ENCODE measurements at regions of chr18 and their contacts with region 1.

Region 1: DNA sequence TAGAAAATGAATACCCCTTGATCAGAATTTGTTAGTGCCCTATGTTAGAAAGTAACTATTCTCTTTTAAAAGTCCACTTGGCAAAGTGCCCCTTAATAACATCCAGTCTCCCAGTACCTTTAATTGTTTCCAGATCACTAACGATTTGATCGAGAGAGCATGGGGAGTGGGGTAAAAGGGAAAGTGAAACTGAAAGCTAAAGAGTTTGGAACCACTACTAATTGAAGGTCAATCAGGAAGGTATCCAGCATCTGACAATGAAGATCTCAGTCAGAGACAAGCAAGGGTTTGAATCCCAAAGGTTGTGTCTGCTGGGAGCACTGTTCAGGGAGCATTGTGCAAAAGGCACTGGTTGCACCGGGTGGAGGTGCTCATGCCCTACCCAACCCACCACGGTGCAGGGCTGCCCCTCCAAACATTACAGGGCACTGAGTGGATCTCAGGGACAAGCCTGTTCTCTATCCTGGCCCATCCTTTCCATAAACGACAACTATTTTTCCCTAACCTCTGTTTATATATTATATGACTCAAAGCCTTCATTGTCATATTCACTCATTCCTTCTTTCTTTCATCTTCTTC is 14.6 kb upstream of the RIT2 start:
- DNase-seq: peak in 1 of 9 experiments; percentile 1
- ATAC-seq: no peak
- H3K4me3 ChIP-seq: no peak overlapping the region
- H3K4me3 Mint-ChIP-seq: no peak overlapping the region
- H3K27ac ChIP-seq: no peak overlapping the region
- H3K27ac Mint-ChIP-seq: no peak overlapping the region
- H3K4me1 ChIP-seq: no peaks in the 10 kb centered on the region
- H3K4me1 Mint-ChIP-seq: no peaks in the 10 kb centered on the region
- H3K27me3 ChIP-seq: no peaks in the 10 kb centered on the region
- H3K27me3 Mint-ChIP-seq: no peaks in the 10 kb centered on the region
- CTCF ChIP-seq: no peak

Region 2: DNA sequence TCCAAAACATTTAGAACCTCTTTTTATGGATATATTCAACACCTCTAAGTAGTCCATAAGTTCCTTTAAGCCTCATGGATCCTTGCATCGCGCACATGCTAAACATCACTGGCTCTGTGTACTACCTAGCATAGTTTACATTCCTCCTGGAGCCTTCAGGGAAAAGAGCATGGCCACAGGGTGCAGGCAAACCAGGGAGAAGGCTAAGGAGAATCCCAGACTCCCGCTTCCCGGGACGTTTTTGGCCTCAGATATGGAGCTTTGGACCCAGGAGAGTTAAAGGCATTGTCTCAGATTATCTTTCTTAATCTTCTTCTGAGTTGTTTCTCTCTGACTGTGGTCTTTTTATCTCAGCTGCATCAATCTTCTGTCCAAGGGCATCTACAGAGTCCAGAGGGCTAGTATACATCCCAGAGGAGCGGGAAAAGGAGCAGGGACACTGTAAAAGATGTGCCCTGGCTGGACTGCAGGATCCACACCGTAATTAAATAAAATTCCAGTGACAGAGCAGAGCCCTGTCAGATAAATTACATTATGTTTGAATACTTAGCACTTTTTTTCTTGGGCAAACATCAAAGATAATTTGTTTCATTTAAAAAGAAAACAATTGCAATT is 51.5 kb before region 1 on chr18:
- CTCF ChIA-PET with region 1: no interaction called
- POLR2A ChIA-PET with region 1: no interaction called
- intact Hi-C with region 1: loop called in 1 of 2 experiments (anchors 10 kb)
- DNase-seq: no peak
- ATAC-seq: no peak
- H3K4me3 ChIP-seq: no peak overlapping the region
- H3K4me3 Mint-ChIP-seq: no peak overlapping the region
- H3K27ac ChIP-seq: no peak overlapping the region
- H3K27ac Mint-ChIP-seq: no peak overlapping the region
- H3K4me1 ChIP-seq: no peaks in the 10 kb centered on the region
- H3K4me1 Mint-ChIP-seq: no peaks in the 10 kb centered on the region
- H3K27me3 ChIP-seq: no peaks in the 10 kb centered on the region
- H3K27me3 Mint-ChIP-seq: no peaks in the 10 kb centered on the region
- CTCF ChIP-seq: no peak